ENCODE measurements at regions of chr1 and their contacts with region 1.

Region 1: GRCh38 chr1:246632281-246633087 is 66.2 kb downstream of the CNST start:
- DNase-seq: no peak
- H3K4me3 ChIP-seq: no peak overlapping the region
- H3K27ac ChIP-seq: peak overlapping the region; percentile 34 to 60
- H3K4me1 ChIP-seq: no peaks in the 10 kb centered on the region
- H3K27me3 ChIP-seq: no peaks in the 10 kb centered on the region
- CTCF ChIP-seq: no peak
- POLR2A ChIP-seq: no peak

Region 2: GRCh38 chr1:246724016-246724730 is 91.7 kb after region 1 on chr1 and contains the start of gene SCCPDH:
- intact Hi-C with region 1: loop called (anchors 10 kb)
- DNase-seq: peak; percentile 18 to 58
- H3K4me3 ChIP-seq: peak within 1 kb of the TSS; percentile 71 to 91 (median 74)
- H3K27ac ChIP-seq: peak within 1 kb of the TSS; percentile 68 to 85
- H3K4me1 ChIP-seq: no peaks in the 10 kb centered on the region
- H3K27me3 ChIP-seq: no peaks in the 10 kb centered on the region
- CTCF ChIP-seq: no peak
- POLR2A ChIP-seq: no peak
- total RNA-seq, gene SCCPDH: 11.3 to 30.8 (median 23.7) TPM

Measured in breast epithelium (tissue), 4 donors.